ENCODE measurements at regions of chr22 and their contacts with region 1.

Region 1: GRCh38 chr22:43945632-43946383 is 9.4 kb upstream of the SAMM50 start:
- DNase-seq: peak; percentile 30
- H3K4me3 ChIP-seq: no peak overlapping the region
- H3K27ac ChIP-seq: no peak overlapping the region
- H3K4me1 ChIP-seq: no peaks in the 10 kb centered on the region
- H3K27me3 ChIP-seq: peaks cover 31% of the 10 kb centered on the region
- CTCF ChIP-seq: peak; percentile 66

Region 2: GRCh38 chr22:43884600-43885325 is 61.0 kb before region 1 on chr22:
- intact Hi-C with region 1: loop called (anchors 10 kb)
- DNase-seq: peak; percentile 59
- H3K4me3 ChIP-seq: no peak overlapping the region
- H3K27ac ChIP-seq: no peak overlapping the region
- H3K4me1 ChIP-seq: no peaks in the 10 kb centered on the region
- H3K27me3 ChIP-seq: peaks cover 67% of the 10 kb centered on the region
- CTCF ChIP-seq: peak; percentile 83

Region 3: DNA sequence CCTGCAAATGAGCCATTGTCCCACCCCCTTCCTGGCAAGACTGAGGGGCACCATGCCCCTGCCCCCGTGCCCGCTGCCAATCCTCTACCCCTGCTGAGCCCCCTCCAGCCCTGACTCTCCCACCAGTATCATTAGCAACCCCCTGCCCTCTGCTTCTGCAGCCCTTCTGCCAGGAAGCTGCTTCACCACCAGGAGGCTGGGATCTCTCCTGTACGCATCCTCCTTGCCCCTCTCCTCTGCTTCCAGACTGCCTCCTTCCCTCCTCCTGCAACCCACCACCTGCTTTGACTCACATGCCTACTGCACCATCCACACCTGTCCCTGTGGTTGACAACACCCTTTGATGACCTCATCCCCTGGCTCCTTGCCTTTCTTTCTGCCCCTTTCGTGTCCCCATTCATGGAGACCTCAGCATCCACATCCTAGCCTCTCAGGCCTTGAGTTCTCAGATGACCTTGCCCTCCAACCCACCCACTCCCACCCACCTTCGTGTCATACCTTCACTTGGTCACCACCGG is 35.6 kb before region 1 on chr22:
- intact Hi-C with region 1: no loop called
- DNase-seq: no peak
- H3K4me3 ChIP-seq: no peak overlapping the region
- H3K27ac ChIP-seq: no peak overlapping the region
- H3K4me1 ChIP-seq: no peaks in the 10 kb centered on the region
- H3K27me3 ChIP-seq: peaks cover 65% of the 10 kb centered on the region
- CTCF ChIP-seq: no peak

Region 4: DNA sequence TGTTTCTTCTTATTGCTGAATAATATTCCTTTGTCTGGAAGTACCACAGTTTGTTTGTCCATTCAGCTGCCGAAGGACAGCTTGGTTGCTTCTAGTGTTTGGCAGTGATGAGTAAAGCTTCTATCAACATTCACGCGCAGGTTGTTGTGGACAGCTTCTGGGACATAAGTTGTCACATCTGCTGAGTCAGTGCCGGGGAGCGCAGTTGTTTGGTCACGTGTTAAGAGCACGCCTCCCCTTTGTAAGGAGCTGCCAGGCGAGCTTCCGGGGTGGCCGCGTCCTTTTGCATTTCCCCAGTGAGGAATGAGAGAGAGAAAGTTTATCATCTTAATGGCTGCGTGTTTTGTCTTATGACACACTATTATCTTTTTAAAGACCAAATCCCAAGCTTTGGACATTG is 39.7 kb after region 1 on chr22:
- intact Hi-C with region 1: no loop called
- DNase-seq: no peak
- H3K4me3 ChIP-seq: no peak overlapping the region
- H3K27ac ChIP-seq: no peak overlapping the region
- H3K4me1 ChIP-seq: no peaks in the 10 kb centered on the region
- H3K27me3 ChIP-seq: no peaks in the 10 kb centered on the region
- CTCF ChIP-seq: no peak

Measured in left ventricle myocardium inferior (tissue), 1 donor.